Activated CD4-positive, alpha-beta T cell treated with anti-CD3 and anti-CD28 coated beads for 36 hours (primary cell): ENCODE measurements at regions of chr9 and their contacts with region 1.

Region 1: GRCh38 chr9:19320495-19320894 is 59.5 kb downstream of the RPS6 start:
- DNase-seq: no peak
- ATAC-seq: no peak
- H3K4me3 Mint-ChIP-seq: no peak overlapping the region
- H3K27ac Mint-ChIP-seq: no peak overlapping the region
- H3K4me1 Mint-ChIP-seq: peaks cover 6% of the 10 kb centered on the region
- H3K27me3 Mint-ChIP-seq: no peaks in the 10 kb centered on the region

Region 2: DNA sequence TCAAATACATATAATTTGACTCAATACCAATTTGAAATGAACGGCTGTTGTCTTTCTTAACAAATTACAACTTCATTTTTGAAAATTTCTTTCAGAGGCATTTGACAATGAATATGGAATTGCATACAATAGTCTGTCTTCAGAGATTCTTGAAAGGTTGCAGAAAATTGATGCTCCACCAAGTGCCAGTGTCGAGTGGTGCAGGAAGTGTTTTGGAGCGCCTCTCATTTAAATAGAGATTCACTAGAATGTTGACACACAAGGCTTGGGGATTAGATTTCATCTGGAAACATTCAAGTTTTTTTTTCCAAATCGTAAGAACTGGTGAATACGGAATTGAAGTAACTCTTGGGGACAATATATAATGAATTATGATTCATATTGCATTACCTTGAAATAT is 51.4 kb after region 1 on chr9:
- CTCF ChIA-PET with region 1: no interaction called
- POLR2A ChIA-PET with region 1: interaction called, 10 read pairs
- intact Hi-C with region 1: no loop called
- DNase-seq: no peak
- ATAC-seq: no peak
- H3K4me3 Mint-ChIP-seq: no peak overlapping the region
- H3K27ac Mint-ChIP-seq: peak overlapping the region; percentile 31
- H3K4me1 Mint-ChIP-seq: peaks cover 14% of the 10 kb centered on the region
- H3K27me3 Mint-ChIP-seq: no peaks in the 10 kb centered on the region

Region 3: GRCh38 chr9:19493174-19493811 is 172.8 kb after region 1 on chr9:
- CTCF ChIA-PET with region 1: no interaction called
- POLR2A ChIA-PET with region 1: no interaction called
- intact Hi-C with region 1: no loop called
- DNase-seq: peak; percentile 63
- ATAC-seq: peak; percentile 68
- H3K4me3 Mint-ChIP-seq: peak overlapping the region; percentile 27
- H3K27ac Mint-ChIP-seq: peak overlapping the region; percentile 40
- H3K4me1 Mint-ChIP-seq: peaks cover 15% of the 10 kb centered on the region
- H3K27me3 Mint-ChIP-seq: peaks cover 2% of the 10 kb centered on the region